ENCODE measurements at regions of chr19 and their contacts with region 1.

Region 1: GRCh38 chr19:54231077-54231931 is 8.5 kb upstream of the LILRB3 start:
- DNase-seq: peak; percentile 79 to 90 (median 86)
- H3K4me3 ChIP-seq: no peak overlapping the region
- H3K27ac ChIP-seq: no peak overlapping the region
- H3K4me1 ChIP-seq: peaks cover 0 to 4% (median 2%) of the 10 kb centered on the region in 4 experiments
- H3K27me3 ChIP-seq: no peaks in the 10 kb centered on the region

Region 2: GRCh38 chr19:54168174-54168917 is 63.0 kb before region 1 on chr19:
- CTCF ChIA-PET with region 1: interaction called, 12 read pairs
- POLR2A ChIA-PET with region 1: no interaction called
- DNase-seq: peak; percentile 81 to 86 (median 85)
- H3K4me3 ChIP-seq: no peak overlapping the region
- H3K27ac ChIP-seq: no peak overlapping the region
- H3K4me1 ChIP-seq: peaks cover 0 to 23% (median 19%) of the 10 kb centered on the region in 4 experiments
- H3K27me3 ChIP-seq: peaks cover 0 to 10% (median 0%) of the 10 kb centered on the region in 5 experiments

Region 3: GRCh38 chr19:54209811-54210494 is 21.4 kb before region 1 on chr19:
- CTCF ChIA-PET with region 1: interaction called, 11 read pairs
- POLR2A ChIA-PET with region 1: interaction called, 3 read pairs
- DNase-seq: peak; percentile 90 to 95 (median 93)
- H3K4me3 ChIP-seq: peak overlapping the region in 5 of 7 experiments; percentile 13 to 57 (median 21)
- H3K27ac ChIP-seq: peak overlapping the region; percentile 85 to 86
- H3K4me1 ChIP-seq: peaks cover 22 to 79% (median 67%) of the 10 kb centered on the region in 4 experiments
- H3K27me3 ChIP-seq: no peaks in the 10 kb centered on the region